Prostate gland (tissue), 2 donors: ENCODE measurements at regions of chr7 and their contacts with region 1.

Region 1: DNA sequence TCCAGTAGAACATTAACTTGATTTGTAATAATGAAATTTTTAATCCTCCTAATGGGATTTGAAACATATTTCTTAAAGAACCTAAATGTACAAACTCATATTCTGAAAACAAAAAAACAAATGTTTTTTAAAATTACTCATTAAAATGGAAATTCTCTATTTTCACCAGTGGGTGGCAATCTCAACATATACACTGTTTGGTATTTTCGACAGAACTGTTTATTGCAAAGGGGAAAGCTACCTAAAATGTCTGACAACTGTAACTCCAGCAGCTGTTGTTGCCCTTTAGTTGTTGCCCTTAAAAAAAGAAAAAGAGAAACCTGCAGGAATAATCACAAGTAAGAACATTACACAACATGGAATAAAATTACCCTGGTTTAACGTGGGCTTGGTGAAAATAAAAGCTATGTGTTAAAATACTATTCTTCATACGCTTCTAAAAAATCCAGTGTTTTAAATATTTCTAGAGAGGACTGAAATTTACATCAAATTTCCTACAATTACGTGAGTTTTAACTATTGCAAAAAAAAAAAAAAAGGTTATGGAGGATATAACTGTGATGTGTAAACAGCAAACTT is 54.5 kb downstream of the COL1A2 start:
- DNase-seq: no peak
- H3K4me3 ChIP-seq: no peak overlapping the region
- H3K27ac ChIP-seq: no peak overlapping the region
- H3K4me1 ChIP-seq: no peaks in the 10 kb centered on the region
- H3K27me3 ChIP-seq: no peaks in the 10 kb centered on the region
- CTCF ChIP-seq: peak in 3 of 4 experiments; percentile 49 to 70 (median 63)
- POLR2A ChIP-seq: no peak

Region 2: DNA sequence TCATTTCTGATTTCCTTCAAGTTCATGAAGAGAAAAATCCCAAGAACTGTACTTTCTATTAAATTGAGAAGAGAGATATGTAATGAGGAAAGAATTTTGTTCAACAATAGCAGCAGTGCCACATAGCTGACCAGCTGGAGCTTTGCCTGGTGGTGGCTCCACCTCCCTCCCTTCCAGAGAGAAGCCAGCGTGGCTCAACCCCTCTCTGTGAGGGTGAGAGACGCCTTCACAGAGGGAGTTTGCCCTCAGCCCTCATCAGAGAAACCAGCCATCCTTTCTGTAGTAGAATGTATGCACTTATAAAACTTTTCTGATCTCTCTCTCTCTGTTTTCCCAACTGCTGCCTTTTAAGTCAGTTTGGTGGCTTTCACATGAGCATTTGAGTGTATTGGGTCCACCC is 75.0 kb before region 1 on chr7:
- intact Hi-C with region 1: no loop called
- DNase-seq: no peak
- H3K4me3 ChIP-seq: no peak overlapping the region
- H3K27ac ChIP-seq: peak overlapping the region; percentile 50 to 65
- H3K4me1 ChIP-seq: no peaks in the 10 kb centered on the region
- H3K27me3 ChIP-seq: no peaks in the 10 kb centered on the region
- CTCF ChIP-seq: no peak
- POLR2A ChIP-seq: no peak

Region 3: GRCh38 chr7:95246831-95247370 is 797.7 kb after region 1 on chr7:
- intact Hi-C with region 1: loop called (anchors 10 kb)
- DNase-seq: peak; percentile 17
- H3K4me3 ChIP-seq: no peak overlapping the region
- H3K27ac ChIP-seq: no peak overlapping the region
- H3K4me1 ChIP-seq: no peaks in the 10 kb centered on the region
- H3K27me3 ChIP-seq: no peaks in the 10 kb centered on the region
- CTCF ChIP-seq: peak; percentile 18 to 59 (median 56)
- POLR2A ChIP-seq: no peak

Region 4: DNA sequence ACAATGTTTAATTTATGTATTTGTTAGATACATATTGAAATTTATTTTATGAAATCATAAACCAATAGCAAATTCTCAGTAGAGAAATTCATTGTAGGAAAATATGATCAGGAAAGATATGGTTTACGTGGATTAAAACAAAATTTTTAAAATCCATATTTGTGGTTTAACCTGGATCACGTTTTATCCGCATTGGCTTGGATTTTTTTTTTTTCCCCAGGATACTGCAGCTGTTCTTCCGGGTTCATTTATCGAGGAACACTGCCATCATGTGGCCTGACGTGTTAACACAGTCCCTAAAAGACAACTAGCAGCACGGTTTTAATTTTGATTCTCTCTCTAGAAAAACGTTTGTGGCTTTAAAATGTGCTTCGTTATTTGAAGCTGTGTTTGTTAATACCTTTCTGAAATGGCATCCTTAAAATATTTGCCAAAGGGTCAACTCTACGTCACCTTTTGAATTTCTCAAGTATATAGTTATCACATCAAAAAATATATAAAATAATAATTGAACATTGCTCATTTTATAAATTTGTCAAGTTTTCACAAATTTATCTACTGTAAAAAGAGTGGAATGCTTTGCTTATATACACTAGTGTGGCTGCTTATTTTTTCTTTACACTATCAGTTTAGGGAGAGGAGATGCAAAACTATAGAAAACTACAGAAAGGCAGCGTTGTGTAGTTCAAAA is 1027.8 kb after region 1 on chr7:
- intact Hi-C with region 1: loop called (anchors 10 kb)
- DNase-seq: peak; percentile 64
- H3K4me3 ChIP-seq: no peak overlapping the region
- H3K27ac ChIP-seq: no peak overlapping the region
- H3K4me1 ChIP-seq: no peaks in the 10 kb centered on the region
- H3K27me3 ChIP-seq: no peaks in the 10 kb centered on the region
- CTCF ChIP-seq: peak; percentile 24 to 75 (median 72)
- POLR2A ChIP-seq: no peak